Activated CD8-positive, alpha-beta T cell treated with anti-CD3 and anti-CD28 coated beads for 36 hours (primary cell): ENCODE measurements at regions of chr4 and their contacts with region 1.

Region 1: GRCh38 chr4:39638354-39639240 is at the start of gene SMIM14:
- DNase-seq: peak; percentile 88
- ATAC-seq: peak; percentile 77
- H3K4me3 Mint-ChIP-seq: peak within 1 kb of the TSS; percentile 89
- H3K27ac Mint-ChIP-seq: peak within 1 kb of the TSS; percentile 82
- H3K4me1 Mint-ChIP-seq: peaks cover 32% of the 10 kb centered on the region
- H3K27me3 Mint-ChIP-seq: no peaks in the 10 kb centered on the region
- CTCF ChIP-seq: no peak
- total RNA-seq, gene SMIM14: 0.87 to 2.0 TPM

Region 2: GRCh38 chr4:39527273-39528060 is 111.1 kb before region 1 on chr4 and contains the start of gene UGDH:
- CTCF ChIA-PET with region 1: interaction called, 3 read pairs
- POLR2A ChIA-PET with region 1: interaction called, 6 read pairs
- intact Hi-C with region 1: loop called (anchors 5 kb)
- DNase-seq: peak; percentile 92
- ATAC-seq: peak; percentile 99
- H3K4me3 Mint-ChIP-seq: peak within 1 kb of the TSS; percentile 85
- H3K27ac Mint-ChIP-seq: peak within 1 kb of the TSS; percentile 93
- H3K4me1 Mint-ChIP-seq: peaks cover 17% of the 10 kb centered on the region
- H3K27me3 Mint-ChIP-seq: no peaks in the 10 kb centered on the region
- CTCF ChIP-seq: no peak
- total RNA-seq, gene UGDH: 14.6 to 16.7 TPM

Region 3: DNA sequence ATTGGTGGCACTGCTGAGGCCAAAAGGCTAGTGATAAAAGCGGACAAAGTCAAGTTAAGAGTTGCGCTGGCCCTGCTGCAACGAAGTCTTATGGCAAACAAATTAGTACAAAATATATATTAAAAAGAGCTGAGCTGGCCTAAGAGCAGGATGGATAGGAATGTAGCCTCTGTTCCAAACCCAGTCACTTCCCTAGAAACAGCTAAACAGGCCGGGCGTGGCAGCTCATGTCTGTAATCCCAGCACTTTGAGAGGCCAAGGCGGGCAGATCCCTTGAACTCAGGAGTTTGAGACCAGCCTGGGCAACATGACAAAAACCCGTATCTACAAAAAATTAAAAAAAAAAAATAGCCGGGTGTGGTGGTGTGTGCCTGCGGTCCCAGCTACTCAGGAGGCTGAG is 79.0 kb before region 1 on chr4:
- CTCF ChIA-PET with region 1: no interaction called
- POLR2A ChIA-PET with region 1: no interaction called
- intact Hi-C with region 1: no loop called
- DNase-seq: no peak
- ATAC-seq: no peak
- H3K4me3 Mint-ChIP-seq: no peak overlapping the region
- H3K27ac Mint-ChIP-seq: no peak overlapping the region
- H3K4me1 Mint-ChIP-seq: no peaks in the 10 kb centered on the region
- H3K27me3 Mint-ChIP-seq: no peaks in the 10 kb centered on the region
- CTCF ChIP-seq: no peak